ENCODE measurements at regions of chr16 and their contacts with region 1.

Region 1: GRCh38 chr16:58249780-58250478 is 44.9 kb downstream of the PRSS54 start:
- DNase-seq: peak; percentile 74 to 91 (median 86)
- ATAC-seq: peak; percentile 98
- H3K4me3 ChIP-seq: peak overlapping the region; percentile 77
- H3K4me3 Mint-ChIP-seq: peak overlapping the region; percentile 77 to 87 (median 82)
- H3K27ac ChIP-seq: peak overlapping the region; percentile 43
- H3K27ac Mint-ChIP-seq: peak overlapping the region in 8 of 9 donors; percentile 31 to 86 (median 67)
- H3K4me1 ChIP-seq: peaks cover 5 to 7% of the 10 kb centered on the region in 2 donors
- H3K4me1 Mint-ChIP-seq: peaks cover 6 to 13% (median 12%) of the 10 kb centered on the region in 7 donors
- H3K27me3 ChIP-seq: no peaks in the 10 kb centered on the region
- H3K27me3 Mint-ChIP-seq: peaks cover 0 to 17% (median under 1%) of the 10 kb centered on the region in 5 donors

Region 2: GRCh38 chr16:57984331-57985203 is 265.4 kb before region 1 on chr16:
- CTCF ChIA-PET with region 1: no interaction called
- POLR2A ChIA-PET with region 1: no interaction called
- intact Hi-C with region 1: loop called in 1 of 2 experiments (anchors 5 kb)
- DNase-seq: peak; percentile 75 to 93 (median 90)
- ATAC-seq: peak; percentile 99
- H3K4me3 ChIP-seq: peak overlapping the region; percentile 63
- H3K4me3 Mint-ChIP-seq: peak overlapping the region; percentile 84 to 94 (median 91)
- H3K27ac ChIP-seq: peak overlapping the region; percentile 64
- H3K27ac Mint-ChIP-seq: peak overlapping the region; percentile 37 to 93 (median 72)
- H3K4me1 ChIP-seq: peaks cover 6% of the 10 kb centered on the region in 2 donors
- H3K4me1 Mint-ChIP-seq: peaks cover 2 to 21% (median 8%) of the 10 kb centered on the region in 7 donors
- H3K27me3 ChIP-seq: no peaks in the 10 kb centered on the region
- H3K27me3 Mint-ChIP-seq: peaks cover 0 to 21% (median 0%) of the 10 kb centered on the region in 5 donors

Region 3: GRCh38 chr16:58236231-58236690 is 13.7 kb before region 1 on chr16:
- CTCF ChIA-PET with region 1: no interaction called
- POLR2A ChIA-PET with region 1: interaction called, 3 read pairs
- intact Hi-C with region 1: loop called (anchors 1 kb)
- DNase-seq: peak; percentile 18 to 56 (median 45)
- ATAC-seq: peak; percentile 89
- H3K4me3 ChIP-seq: peak overlapping the region; percentile 64
- H3K4me3 Mint-ChIP-seq: peak overlapping the region; percentile 82 to 93 (median 89)
- H3K27ac ChIP-seq: no peak overlapping the region
- H3K27ac Mint-ChIP-seq: peak overlapping the region in 4 of 9 donors; percentile 5 to 36 (median 23)
- H3K4me1 ChIP-seq: peaks cover 8 to 10% of the 10 kb centered on the region in 2 donors
- H3K4me1 Mint-ChIP-seq: peaks cover 0 to 17% (median 13%) of the 10 kb centered on the region in 7 donors
- H3K27me3 ChIP-seq: no peaks in the 10 kb centered on the region
- H3K27me3 Mint-ChIP-seq: peaks cover 5 to 47% (median 21%) of the 10 kb centered on the region in 5 donors